Endothelial cell of umbilical vein (primary cell): ENCODE measurements at regions of chr3 and their contacts with region 1.

Region 1: GRCh38 chr3:129305592-129306091 is 27.0 kb downstream of the HMCES start:
- DNase-seq: peak; percentile 83
- H3K4me3 ChIP-seq: peak overlapping the region in 2 of 3 experiments; percentile 0 to 13
- H3K27ac ChIP-seq: peak overlapping the region; percentile 26
- H3K4me1 ChIP-seq: peaks cover 11% of the 10 kb centered on the region
- H3K27me3 ChIP-seq: no peaks in the 10 kb centered on the region
- CTCF ChIP-seq: no peak
- POLR2A ChIP-seq: no peak

Region 2: GRCh38 chr3:129316131-129317013 is 10.7 kb after region 1 on chr3:
- CTCF ChIA-PET with region 1: interaction called, 12 read pairs
- POLR2A ChIA-PET with region 1: interaction called, 11 read pairs
- dilution Hi-C with region 1: no loop called
- intact Hi-C with region 1: loop called (anchors 1 kb)
- DNase-seq: peak; percentile 78
- H3K4me3 ChIP-seq: peak overlapping the region; percentile 51 to 90 (median 68)
- H3K27ac ChIP-seq: peak overlapping the region; percentile 76
- H3K4me1 ChIP-seq: peaks cover 4% of the 10 kb centered on the region
- H3K27me3 ChIP-seq: no peaks in the 10 kb centered on the region
- CTCF ChIP-seq: peak; percentile 52 to 63
- POLR2A ChIP-seq: peak; percentile 100